G401 (cell line): ENCODE measurements at regions of chr22 and their contacts with region 1.

Region 1: DNA sequence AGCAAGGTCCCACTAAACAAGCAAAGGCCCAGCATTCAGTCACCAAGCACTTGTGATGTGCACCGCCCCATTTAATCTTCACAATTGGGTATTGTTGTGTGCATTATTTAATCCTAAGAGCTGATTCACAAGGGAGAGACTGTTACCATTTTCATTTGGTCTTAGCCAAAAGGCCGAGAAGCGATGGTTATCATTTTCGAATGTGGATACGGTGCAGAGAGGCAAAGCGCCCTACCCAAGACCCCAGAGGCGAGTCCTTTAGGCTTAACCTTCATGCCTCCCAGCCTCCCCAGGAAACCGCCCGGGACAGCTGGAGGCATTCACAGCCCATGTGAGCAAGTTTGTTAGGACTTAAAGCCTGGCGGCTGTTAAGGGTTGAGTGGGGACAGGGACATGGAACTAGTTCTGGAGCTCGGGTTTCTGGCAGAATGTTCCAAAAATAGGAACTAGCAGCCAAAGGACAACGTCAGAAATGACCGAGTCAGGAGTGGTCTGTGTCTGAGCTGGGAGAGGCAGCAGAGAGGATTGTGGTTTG is 13.0 kb upstream of the UPK3A start:
- DNase-seq: peak; percentile 15

Region 2: GRCh38 chr22:44796972-44797725 is 474.6 kb before region 1 on chr22:
- in situ Hi-C with region 1: loop called (anchors 10 kb)
- DNase-seq: peak; percentile 20

Region 3: GRCh38 chr22:45318168-45318557 is 46.4 kb after region 1 on chr22:
- in situ Hi-C with region 1: no loop called
- DNase-seq: peak; percentile 78

Region 4: DNA sequence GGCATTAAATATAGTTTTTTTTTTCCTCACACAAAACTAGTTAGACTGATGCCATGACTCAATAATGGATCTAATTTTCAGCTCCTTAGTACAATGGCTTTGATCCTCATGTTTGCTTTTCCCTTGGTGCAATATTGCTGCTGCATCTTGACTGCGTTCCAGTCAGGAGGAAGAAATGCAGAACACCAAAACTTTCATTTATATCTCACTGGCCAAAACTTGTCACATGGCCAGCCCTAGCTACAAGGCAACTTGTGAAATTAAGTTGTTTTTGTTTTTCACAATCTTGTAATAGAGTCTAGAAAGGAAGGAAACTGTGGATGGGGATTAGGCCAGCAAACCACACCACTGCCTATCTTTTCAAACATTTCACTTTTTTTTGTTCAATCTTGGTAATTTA is 105.0 kb after region 1 on chr22:
- in situ Hi-C with region 1: no loop called
- DNase-seq: no peak

Region 5: GRCh38 chr22:45435544-45436139 is 163.9 kb after region 1 on chr22:
- in situ Hi-C with region 1: loop called (anchors 10 kb)
- DNase-seq: peak; percentile 83

Region 6: DNA sequence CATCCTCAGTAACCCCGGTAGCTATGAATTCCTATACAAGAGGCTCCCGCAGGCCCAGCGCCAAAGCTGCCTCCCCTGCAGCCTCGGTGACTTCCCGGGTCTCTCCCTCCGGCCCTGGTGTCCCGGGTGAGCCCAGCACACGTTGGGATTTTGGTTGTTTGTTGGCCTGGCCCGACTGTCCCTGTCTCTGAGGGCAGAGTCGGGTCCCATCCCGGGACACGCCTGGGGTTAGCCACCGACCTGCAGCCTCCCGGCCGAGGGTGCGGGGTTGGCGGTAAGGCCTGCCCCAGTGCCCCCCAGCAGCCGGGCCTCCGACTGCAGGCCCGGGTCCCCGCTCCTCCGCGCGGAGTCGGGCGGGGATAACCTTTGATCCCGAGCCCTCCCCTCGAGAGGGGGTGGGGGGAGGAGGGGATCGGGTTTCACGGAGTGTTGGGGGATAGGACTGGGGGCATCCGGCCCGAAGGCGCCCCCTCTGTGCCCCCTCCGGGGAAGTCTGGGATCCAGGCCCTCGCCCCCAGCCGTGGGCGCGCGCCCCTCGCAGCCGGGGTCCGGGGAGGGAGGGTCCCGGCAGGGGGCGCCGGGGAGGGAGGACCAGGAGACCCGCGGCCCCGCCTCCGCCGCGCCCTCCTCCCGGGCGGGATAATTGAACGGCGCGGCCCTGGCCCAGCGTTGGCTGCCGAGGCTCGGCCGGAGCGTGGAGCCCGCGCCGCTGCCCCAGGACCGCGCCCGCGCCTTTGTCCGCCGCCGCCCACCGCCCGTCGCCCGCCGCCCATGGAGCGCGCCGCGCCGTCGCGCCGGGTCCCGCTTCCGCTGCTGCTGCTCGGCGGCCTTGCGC is 230.7 kb after region 1 on chr22 and contains the start of gene FBLN1:
- in situ Hi-C with region 1: no loop called
- DNase-seq: no peak
- total RNA-seq, gene FBLN1: 97.6 and 128 TPM in 2 replicates